MCF 10A (cell line): ENCODE measurements at regions of chr5 and their contacts with region 1.

Region 1: GRCh38 chr5:145825751-145826180 is 9.4 kb downstream of the PRELID2 start:
- DNase-seq: peak; percentile 76
- H3K4me3 Mint-ChIP-seq: no peak overlapping the region
- H3K27ac Mint-ChIP-seq: no peak overlapping the region
- H3K4me1 Mint-ChIP-seq: peaks cover 26% of the 10 kb centered on the region
- H3K27me3 Mint-ChIP-seq: no peaks in the 10 kb centered on the region
- CTCF ChIP-seq: peak; percentile 97

Region 2: DNA sequence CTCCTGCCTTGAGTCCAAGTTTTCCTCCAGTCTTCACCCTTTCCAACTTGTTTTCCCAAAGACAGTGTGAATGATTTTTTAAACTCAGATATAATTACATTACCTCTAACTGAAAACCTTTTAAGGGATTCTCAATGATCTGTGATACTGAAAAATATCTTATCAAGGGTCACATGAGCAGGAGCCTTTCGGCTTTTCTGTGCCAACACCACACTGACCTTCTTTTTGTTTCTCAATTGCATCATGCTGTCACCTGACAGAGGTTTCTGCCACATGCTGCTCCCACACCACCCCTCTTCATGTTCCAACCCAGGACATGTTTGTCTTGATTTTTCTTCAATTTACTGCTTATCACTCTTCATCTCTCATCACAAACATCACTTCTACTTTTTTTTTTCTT is 810.6 kb before region 1 on chr5:
- CTCF ChIA-PET with region 1: no interaction called
- POLR2A ChIA-PET with region 1: no interaction called
- intact Hi-C with region 1: no loop called
- DNase-seq: no peak
- H3K4me3 Mint-ChIP-seq: no peak overlapping the region
- H3K27ac Mint-ChIP-seq: no peak overlapping the region
- H3K4me1 Mint-ChIP-seq: no peaks in the 10 kb centered on the region
- H3K27me3 Mint-ChIP-seq: no peaks in the 10 kb centered on the region
- CTCF ChIP-seq: no peak

Region 3: GRCh38 chr5:145246961-145247744 is 578.6 kb before region 1 on chr5:
- CTCF ChIA-PET with region 1: interaction called, 5 read pairs
- POLR2A ChIA-PET with region 1: no interaction called
- intact Hi-C with region 1: loop called (anchors 5 kb)
- DNase-seq: peak; percentile 70
- H3K4me3 Mint-ChIP-seq: no peak overlapping the region
- H3K27ac Mint-ChIP-seq: peak overlapping the region; percentile 78
- H3K4me1 Mint-ChIP-seq: peaks cover 42% of the 10 kb centered on the region
- H3K27me3 Mint-ChIP-seq: no peaks in the 10 kb centered on the region
- CTCF ChIP-seq: no peak

Region 4: GRCh38 chr5:145637396-145637795 is 188.4 kb before region 1 on chr5:
- CTCF ChIA-PET with region 1: no interaction called
- POLR2A ChIA-PET with region 1: no interaction called
- intact Hi-C with region 1: no loop called
- DNase-seq: no peak
- H3K4me3 Mint-ChIP-seq: no peak overlapping the region
- H3K27ac Mint-ChIP-seq: no peak overlapping the region
- H3K4me1 Mint-ChIP-seq: no peaks in the 10 kb centered on the region
- H3K27me3 Mint-ChIP-seq: no peaks in the 10 kb centered on the region
- CTCF ChIP-seq: no peak

Region 5: DNA sequence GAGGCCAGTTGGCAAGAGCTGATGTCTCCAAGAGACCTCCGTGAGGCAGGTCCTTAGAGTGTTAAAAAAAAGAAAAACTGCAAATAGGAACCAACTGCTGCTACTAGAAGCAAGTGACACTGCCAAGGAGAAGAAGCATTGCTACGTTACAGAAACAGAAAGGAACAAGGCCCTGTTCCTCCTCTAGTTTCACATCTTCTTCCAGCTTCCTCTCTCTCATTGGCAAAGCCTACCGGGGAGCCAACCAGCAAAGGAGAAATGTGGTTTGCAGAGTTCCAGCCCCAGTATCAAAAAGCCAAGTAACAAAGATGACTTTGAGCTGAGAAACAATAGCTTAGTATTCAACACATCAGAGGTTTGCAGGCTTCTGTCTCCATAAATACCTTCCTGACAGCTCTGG is 136.5 kb before region 1 on chr5:
- CTCF ChIA-PET with region 1: interaction called, 131 read pairs
- POLR2A ChIA-PET with region 1: interaction called, 3 read pairs
- intact Hi-C with region 1: no loop called
- DNase-seq: no peak
- H3K4me3 Mint-ChIP-seq: no peak overlapping the region
- H3K27ac Mint-ChIP-seq: no peak overlapping the region
- H3K4me1 Mint-ChIP-seq: no peaks in the 10 kb centered on the region
- H3K27me3 Mint-ChIP-seq: no peaks in the 10 kb centered on the region
- CTCF ChIP-seq: no peak

Region 6: DNA sequence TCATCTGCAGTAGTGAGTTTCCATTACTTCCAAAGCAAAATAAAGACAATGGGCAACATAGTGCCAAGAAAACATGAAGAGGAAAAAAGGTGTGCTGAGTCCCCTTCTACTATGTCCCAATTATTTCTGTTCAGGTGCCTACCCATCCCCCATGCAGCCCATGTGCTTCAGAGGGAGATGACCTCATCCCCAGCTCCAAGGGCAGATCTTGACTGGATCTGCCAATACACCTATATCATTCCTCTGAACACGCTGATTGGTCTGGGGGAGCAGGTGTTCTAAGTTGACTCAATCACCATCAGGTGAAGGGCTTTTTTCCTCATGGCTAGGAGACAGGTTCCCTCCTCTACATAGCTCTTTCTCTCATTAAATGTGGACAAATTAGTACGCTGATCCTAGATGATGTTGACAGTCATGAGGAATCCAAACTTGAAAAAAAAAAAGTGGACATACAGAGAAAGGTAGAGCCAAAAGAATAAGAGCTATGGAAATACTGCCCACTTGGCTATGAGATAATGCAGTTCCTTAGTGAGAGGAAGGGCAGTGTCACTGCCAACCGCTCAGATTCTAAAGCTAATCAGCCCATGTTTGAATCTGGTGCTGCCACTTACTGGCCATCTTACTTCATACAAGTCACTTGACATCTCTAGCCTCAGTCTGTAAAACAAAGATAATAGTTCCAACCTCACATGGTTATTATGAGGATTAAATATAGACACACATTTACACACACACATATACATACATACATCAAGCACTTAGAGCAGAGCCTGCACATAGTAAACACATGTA is 13.7 kb before region 1 on chr5:
- CTCF ChIA-PET with region 1: interaction called, 38 read pairs
- POLR2A ChIA-PET with region 1: interaction called, 3 read pairs
- intact Hi-C with region 1: no loop called
- DNase-seq: peak; percentile 60
- H3K4me3 Mint-ChIP-seq: no peak overlapping the region
- H3K27ac Mint-ChIP-seq: no peak overlapping the region
- H3K4me1 Mint-ChIP-seq: no peaks in the 10 kb centered on the region
- H3K27me3 Mint-ChIP-seq: no peaks in the 10 kb centered on the region
- CTCF ChIP-seq: peak; percentile 45

Region 7: GRCh38 chr5:145887976-145888574 is 62.3 kb after region 1 on chr5:
- CTCF ChIA-PET with region 1: interaction called, 63 read pairs
- POLR2A ChIA-PET with region 1: interaction called, 5 read pairs
- intact Hi-C with region 1: no loop called
- DNase-seq: peak; percentile 77
- H3K4me3 Mint-ChIP-seq: no peak overlapping the region
- H3K27ac Mint-ChIP-seq: no peak overlapping the region
- H3K4me1 Mint-ChIP-seq: peaks cover 5% of the 10 kb centered on the region
- H3K27me3 Mint-ChIP-seq: no peaks in the 10 kb centered on the region
- CTCF ChIP-seq: peak; percentile 79

Region 8: DNA sequence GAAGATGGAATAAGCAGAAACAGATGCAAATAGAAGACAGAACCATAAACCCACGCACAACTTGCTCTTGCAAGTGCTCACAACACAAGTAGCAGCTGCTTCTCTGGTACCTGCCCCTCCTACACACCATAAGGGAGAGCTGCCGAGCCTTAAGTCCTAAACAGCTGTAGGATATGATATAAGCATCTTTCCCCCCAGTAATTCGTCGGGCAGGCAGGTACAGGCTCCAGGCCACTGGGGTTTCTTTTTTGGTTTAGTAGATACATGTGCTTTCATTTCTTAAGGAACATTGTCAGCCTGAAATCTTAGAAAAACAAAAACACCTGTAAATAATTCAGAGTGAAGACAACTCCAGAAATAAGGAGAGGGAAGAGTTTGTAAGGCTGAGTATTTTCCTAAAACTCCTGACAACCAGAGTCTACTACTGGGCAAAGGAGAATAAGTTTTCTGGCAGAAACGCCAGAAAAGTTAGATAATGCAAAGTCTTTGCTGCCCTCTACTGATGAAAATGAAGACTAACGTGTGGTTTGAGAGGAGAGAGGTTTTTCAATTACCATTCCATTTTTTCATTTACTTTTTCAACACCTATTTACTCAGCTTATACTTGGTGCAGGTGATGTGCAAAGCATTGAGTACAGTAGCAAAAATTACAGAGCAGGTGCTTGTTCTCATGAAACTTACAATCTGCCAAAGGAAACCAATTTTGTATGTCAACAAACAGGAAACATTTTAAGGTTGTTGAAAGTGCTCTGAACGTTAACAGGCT is 601.3 kb after region 1 on chr5:
- CTCF ChIA-PET with region 1: no interaction called
- POLR2A ChIA-PET with region 1: no interaction called
- intact Hi-C with region 1: loop called (anchors 10 kb)
- DNase-seq: peak; percentile 66
- H3K4me3 Mint-ChIP-seq: no peak overlapping the region
- H3K27ac Mint-ChIP-seq: no peak overlapping the region
- H3K4me1 Mint-ChIP-seq: no peaks in the 10 kb centered on the region
- H3K27me3 Mint-ChIP-seq: no peaks in the 10 kb centered on the region
- CTCF ChIP-seq: peak; percentile 85